CD4-positive, alpha-beta T cell (primary cell): ENCODE measurements at regions of chr6 and their contacts with region 1.

Region 1: GRCh38 chr6:135183532-135184440 is 2.7 kb downstream of the MYB start:
- DNase-seq: peak; percentile 59 to 89 (median 76)
- ATAC-seq: peak; percentile 57
- H3K4me3 ChIP-seq: peak overlapping the region; percentile 71
- H3K4me3 Mint-ChIP-seq: peak overlapping the region; percentile 94
- H3K27ac ChIP-seq: peak overlapping the region in 1 of 2 donors; percentile 24
- H3K27ac Mint-ChIP-seq: peak overlapping the region; percentile 57
- H3K4me1 ChIP-seq: peaks cover 26% of the 10 kb centered on the region
- H3K4me1 Mint-ChIP-seq: peaks cover 36% of the 10 kb centered on the region
- H3K27me3 ChIP-seq: no peaks in the 10 kb centered on the region
- H3K27me3 Mint-ChIP-seq: no peaks in the 10 kb centered on the region
- CTCF ChIP-seq: peak; percentile 67

Region 2: DNA sequence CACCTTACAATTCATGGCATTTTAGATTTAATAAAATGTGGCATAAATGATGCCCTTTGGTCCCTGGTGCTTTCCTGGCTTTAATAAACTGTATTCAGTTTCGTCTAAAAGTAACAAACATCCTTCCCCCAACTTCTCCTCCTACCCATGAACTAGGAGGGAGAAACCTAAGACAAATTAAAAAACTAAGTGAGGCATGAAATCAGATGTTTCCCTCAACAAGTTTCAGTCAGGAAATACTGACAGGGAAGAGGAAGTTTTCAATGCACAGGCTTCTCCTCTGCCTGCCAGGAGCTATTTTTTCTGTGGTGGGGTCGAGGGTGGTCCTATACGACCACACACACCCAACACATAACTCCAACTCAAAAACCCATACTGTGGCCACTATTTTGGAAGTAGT is 139.1 kb before region 1 on chr6:
- CTCF ChIA-PET with region 1: interaction called, 4 read pairs
- POLR2A ChIA-PET with region 1: interaction called, 3 read pairs
- intact Hi-C with region 1: loop called in 1 of 2 experiments (anchors 5 kb)
- DNase-seq: no peak
- ATAC-seq: no peak
- H3K4me3 ChIP-seq: no peak overlapping the region
- H3K4me3 Mint-ChIP-seq: no peak overlapping the region
- H3K27ac ChIP-seq: no peak overlapping the region
- H3K27ac Mint-ChIP-seq: peak overlapping the region; percentile 66
- H3K4me1 ChIP-seq: peaks cover 26% of the 10 kb centered on the region
- H3K4me1 Mint-ChIP-seq: peaks cover 80% of the 10 kb centered on the region
- H3K27me3 ChIP-seq: no peaks in the 10 kb centered on the region
- H3K27me3 Mint-ChIP-seq: no peaks in the 10 kb centered on the region
- CTCF ChIP-seq: no peak

Region 3: GRCh38 chr6:135105710-135106109 is 78.1 kb before region 1 on chr6:
- CTCF ChIA-PET with region 1: interaction called, 7 read pairs
- POLR2A ChIA-PET with region 1: interaction called, 8 read pairs
- intact Hi-C with region 1: loop called in 1 of 2 experiments (anchors 5 kb)
- DNase-seq: no peak
- ATAC-seq: no peak
- H3K4me3 ChIP-seq: no peak overlapping the region
- H3K4me3 Mint-ChIP-seq: no peak overlapping the region
- H3K27ac ChIP-seq: no peak overlapping the region
- H3K27ac Mint-ChIP-seq: peak overlapping the region; percentile 89
- H3K4me1 ChIP-seq: peaks cover 24% of the 10 kb centered on the region
- H3K4me1 Mint-ChIP-seq: peaks cover 66% of the 10 kb centered on the region
- H3K27me3 ChIP-seq: no peaks in the 10 kb centered on the region
- H3K27me3 Mint-ChIP-seq: no peaks in the 10 kb centered on the region
- CTCF ChIP-seq: no peak

Region 4: DNA sequence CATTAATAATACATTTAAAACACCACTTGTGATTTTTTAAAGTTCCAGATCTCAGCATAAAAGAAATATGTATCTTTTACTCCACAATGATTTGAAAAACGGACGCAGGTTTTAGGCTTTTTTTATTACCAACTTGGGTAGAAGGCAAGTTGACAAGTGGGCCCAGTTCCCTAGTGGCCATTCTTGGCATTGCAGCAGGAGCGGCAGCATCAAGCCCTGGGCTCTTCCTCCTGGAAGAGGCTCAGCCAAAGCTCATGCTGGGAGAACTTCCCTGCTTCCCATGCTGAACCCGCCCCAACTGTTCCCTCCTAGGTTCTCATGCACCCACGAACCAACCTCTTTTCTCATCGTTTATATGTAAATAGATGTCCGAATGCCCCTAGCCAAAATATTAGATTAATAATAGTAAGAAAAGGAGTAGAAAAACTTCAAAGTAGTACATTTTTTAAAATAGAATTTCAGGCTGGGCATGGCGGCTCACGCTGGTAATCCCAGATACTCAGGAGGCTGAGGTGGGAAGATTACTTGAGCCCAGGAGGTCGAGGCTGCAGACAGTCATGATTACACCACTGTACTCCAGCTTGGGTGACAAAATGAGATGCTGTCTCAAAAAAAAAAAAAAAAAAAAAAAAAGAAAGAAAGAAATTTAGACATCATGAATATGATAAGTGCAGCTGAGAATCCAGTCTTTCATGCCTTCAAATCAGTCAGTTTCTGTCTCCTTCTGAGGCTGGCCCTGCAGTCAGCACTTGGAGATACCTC is 20.9 kb before region 1 on chr6:
- CTCF ChIA-PET with region 1: interaction called, 5 read pairs
- POLR2A ChIA-PET with region 1: interaction called, 4 read pairs
- intact Hi-C with region 1: loop called in 1 of 2 experiments (anchors 1 kb)
- DNase-seq: peak in 7 of 14 experiments; percentile 5 to 64 (median 41)
- ATAC-seq: no peak
- H3K4me3 ChIP-seq: no peak overlapping the region
- H3K4me3 Mint-ChIP-seq: no peak overlapping the region
- H3K27ac ChIP-seq: no peak overlapping the region
- H3K27ac Mint-ChIP-seq: no peak overlapping the region
- H3K4me1 ChIP-seq: peaks cover 8% of the 10 kb centered on the region
- H3K4me1 Mint-ChIP-seq: peaks cover 19% of the 10 kb centered on the region
- H3K27me3 ChIP-seq: no peaks in the 10 kb centered on the region
- H3K27me3 Mint-ChIP-seq: no peaks in the 10 kb centered on the region
- CTCF ChIP-seq: peak; percentile 68